HCT116 (cell line): ENCODE measurements at regions of chr9 and their contacts with region 1.

Region 1: DNA sequence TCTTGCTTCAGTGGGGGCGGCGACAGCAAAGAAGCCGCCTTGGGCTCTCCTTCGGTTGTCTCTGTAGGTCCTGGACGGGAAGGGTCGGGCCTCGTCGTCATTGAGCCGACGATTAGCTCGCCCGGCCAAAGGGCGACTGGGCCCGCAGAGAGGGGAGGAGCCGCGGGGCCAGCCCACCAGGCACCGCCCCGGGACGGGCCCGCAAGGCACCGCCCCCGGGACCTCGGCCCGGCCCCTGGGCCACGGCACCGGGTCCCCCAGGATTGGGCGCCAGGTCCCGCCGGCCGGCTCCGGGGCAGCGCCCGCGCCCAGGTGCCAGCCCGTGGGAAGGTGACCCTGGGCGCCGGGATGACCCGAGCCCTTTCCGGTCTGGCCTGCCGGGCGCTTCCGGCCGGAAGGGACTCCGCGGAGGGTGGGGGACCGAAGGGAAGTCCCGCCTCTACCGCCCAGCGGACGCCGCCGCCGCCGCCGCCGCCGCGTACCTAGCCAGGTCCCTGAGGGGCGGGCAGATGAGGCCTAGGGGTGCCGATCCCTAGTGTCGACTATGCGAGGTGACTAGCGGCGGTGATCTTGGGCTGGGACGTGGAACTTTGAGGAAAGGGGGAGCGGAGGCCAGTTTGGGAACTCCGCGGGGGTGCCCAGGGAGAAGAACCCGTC is at the starts of genes GBA2 and RGP1:
- DNase-seq: peak; percentile 42
- ATAC-seq: peak; percentile 87
- H3K4me3 ChIP-seq: peak within 1 kb of the TSS; percentile 89 to 92
- H3K27ac ChIP-seq: peak within 1 kb of the TSS; percentile 98
- H3K4me1 ChIP-seq: peaks cover 21 to 25% of the 10 kb centered on the region in 2 experiments
- H3K27me3 ChIP-seq: no peaks in the 10 kb centered on the region
- CTCF ChIP-seq: no peak
- POLR2A ChIP-seq: no peak
- RAD21 ChIP-seq: no peak
- total RNA-seq, gene GBA2: 63.6 TPM
- total RNA-seq, gene RGP1: 32.6 TPM

Region 2: DNA sequence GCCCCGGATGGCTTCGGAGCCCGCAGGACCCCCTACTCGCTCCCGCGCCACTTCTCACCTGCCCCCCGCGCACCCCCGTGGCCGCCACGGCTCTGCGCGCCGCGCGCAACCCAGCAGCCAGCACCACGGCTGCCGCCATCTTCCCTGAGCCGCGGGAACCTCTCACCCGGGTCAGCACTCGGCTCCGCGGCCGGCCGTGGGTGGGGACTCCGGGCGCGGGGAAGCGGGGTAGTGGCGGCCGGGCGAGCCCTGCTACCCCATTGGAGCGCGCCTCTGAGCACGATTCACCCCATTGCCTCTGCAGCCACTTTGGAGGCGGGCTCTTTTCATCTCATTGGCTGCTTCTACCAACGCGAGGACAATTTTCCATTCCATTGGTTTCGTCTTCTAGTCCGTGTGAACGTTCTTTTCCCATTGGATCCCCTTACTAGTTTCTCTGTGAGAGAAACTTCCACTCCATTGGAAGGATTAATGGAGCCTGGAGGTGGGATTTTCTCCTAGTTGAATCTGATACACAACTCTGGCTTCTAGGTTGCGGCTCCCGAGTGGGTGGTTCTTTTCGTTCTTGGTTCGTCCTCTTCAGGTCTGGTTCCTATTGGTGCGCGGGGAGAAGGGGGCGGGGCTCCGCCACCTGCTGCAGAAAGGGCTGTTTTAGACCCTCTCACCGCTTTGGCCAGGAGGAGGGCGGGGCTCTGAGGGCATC is 66.0 kb after region 1 on chr9 and contains the start of gene HINT2:
- CTCF ChIA-PET with region 1: no interaction called
- POLR2A ChIA-PET with region 1: no interaction called
- RAD21 ChIA-PET with region 1: no interaction called
- intact Hi-C with region 1: loop called (anchors 2 kb)
- DNase-seq: peak; percentile 98
- ATAC-seq: peak; percentile 90
- H3K4me3 ChIP-seq: peak within 1 kb of the TSS; percentile 86 to 88
- H3K27ac ChIP-seq: peak within 1 kb of the TSS; percentile 97
- H3K4me1 ChIP-seq: peaks cover 7 to 17% of the 10 kb centered on the region in 2 experiments; a peak in 3 of 4 replicates
- H3K27me3 ChIP-seq: no peaks in the 10 kb centered on the region
- CTCF ChIP-seq: no peak
- POLR2A ChIP-seq: peak; percentile 77
- RAD21 ChIP-seq: no peak
- total RNA-seq, gene HINT2: 49.0 TPM